Heart left ventricle (tissue), 16 donors: ENCODE measurements at regions of chr6 and their contacts with region 1.

Region 1: DNA sequence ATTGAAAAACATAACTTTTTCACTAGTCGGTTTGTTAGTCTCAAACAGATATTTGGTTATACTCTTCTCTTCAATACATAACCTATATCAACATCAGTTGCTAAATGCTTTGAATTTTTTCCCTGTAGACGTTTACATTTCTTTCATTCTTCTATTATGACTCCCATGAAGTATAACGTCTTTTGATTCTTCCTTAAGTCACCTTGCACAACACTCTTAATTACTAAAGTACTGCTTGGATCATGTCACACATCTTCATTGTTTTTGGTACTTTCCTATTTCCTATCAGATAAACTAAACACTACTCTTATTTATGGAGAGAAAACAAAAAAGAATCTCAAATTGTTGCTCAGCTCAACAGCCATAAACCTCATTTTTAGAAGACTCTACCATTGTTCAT is 23.0 kb upstream of the BMP5 start:
- DNase-seq: no peak
- ATAC-seq: no peak
- H3K4me3 ChIP-seq: no peak overlapping the region
- H3K27ac ChIP-seq: no peak overlapping the region
- H3K4me1 ChIP-seq: no peaks in the 10 kb centered on the region
- H3K27me3 ChIP-seq: no peaks in the 10 kb centered on the region
- CTCF ChIP-seq: no peak
- POLR2A ChIP-seq: no peak

Region 2: GRCh38 chr6:55941702-55942101 is 43.4 kb after region 1 on chr6:
- intact Hi-C with region 1: loop called in 1 of 10 experiments (anchors 10 kb)
- DNase-seq: no peak
- ATAC-seq: no peak
- H3K4me3 ChIP-seq: no peak overlapping the region
- H3K27ac ChIP-seq: no peak overlapping the region
- H3K4me1 ChIP-seq: no peaks in the 10 kb centered on the region
- H3K27me3 ChIP-seq: no peaks in the 10 kb centered on the region
- CTCF ChIP-seq: peak in 5 of 12 donors; percentile 13 to 41 (median 29)
- POLR2A ChIP-seq: no peak

Region 3: DNA sequence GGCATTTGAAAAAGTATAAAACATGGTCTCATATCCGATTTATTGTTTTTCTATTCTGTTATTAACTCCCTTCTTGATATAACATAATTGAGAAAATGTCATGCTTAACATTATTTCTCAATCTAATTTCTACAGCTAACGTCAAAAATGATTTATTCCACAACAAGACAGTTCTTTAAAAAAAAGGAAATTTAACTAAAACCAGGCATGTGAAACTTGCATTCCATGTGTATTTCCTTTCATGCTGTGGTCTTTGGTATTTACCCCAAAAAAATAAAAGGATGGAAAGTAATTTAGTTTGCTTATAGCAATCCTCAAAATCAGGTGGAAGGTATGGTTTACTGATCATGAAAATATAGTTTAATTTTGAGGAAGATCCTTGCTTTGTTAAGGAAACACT is 206.2 kb after region 1 on chr6:
- intact Hi-C with region 1: no loop called
- DNase-seq: no peak
- ATAC-seq: no peak
- H3K4me3 ChIP-seq: no peak overlapping the region
- H3K27ac ChIP-seq: no peak overlapping the region
- H3K4me1 ChIP-seq: peaks cover 0 to 8% (median 0%) of the 10 kb centered on the region in 12 donors
- H3K27me3 ChIP-seq: no peaks in the 10 kb centered on the region
- CTCF ChIP-seq: no peak
- POLR2A ChIP-seq: no peak